ENCODE measurements at regions of chr2 and their contacts with region 1.

Region 1: DNA sequence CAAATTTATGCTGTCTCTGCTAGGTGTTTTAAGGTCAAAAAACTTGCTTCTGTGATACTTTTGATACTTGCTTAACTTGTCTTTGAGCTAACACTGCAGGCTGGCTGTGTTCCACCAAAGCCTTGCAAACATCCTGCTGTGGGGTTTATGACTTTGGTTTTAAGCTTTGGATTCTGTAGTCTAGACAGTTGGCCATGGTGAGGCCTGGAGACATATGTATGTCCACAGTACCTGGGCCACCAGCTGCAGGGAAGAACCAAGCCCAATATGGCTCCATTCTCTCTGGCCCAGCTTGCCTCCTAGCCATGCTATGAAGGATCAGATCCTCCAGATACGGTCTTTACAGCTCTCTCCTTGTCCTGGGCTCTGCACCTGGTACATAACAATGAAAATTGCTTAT is 113.9 kb downstream of the INO80D start:
- DNase-seq: peak; percentile 65
- ATAC-seq: peak; percentile 55
- H3K4me3 ChIP-seq: no peak overlapping the region
- H3K27ac ChIP-seq: no peak overlapping the region
- H3K4me1 ChIP-seq: peaks cover 21% of the 10 kb centered on the region
- H3K27me3 ChIP-seq: no peaks in the 10 kb centered on the region
- CTCF ChIP-seq: no peak

Region 2: DNA sequence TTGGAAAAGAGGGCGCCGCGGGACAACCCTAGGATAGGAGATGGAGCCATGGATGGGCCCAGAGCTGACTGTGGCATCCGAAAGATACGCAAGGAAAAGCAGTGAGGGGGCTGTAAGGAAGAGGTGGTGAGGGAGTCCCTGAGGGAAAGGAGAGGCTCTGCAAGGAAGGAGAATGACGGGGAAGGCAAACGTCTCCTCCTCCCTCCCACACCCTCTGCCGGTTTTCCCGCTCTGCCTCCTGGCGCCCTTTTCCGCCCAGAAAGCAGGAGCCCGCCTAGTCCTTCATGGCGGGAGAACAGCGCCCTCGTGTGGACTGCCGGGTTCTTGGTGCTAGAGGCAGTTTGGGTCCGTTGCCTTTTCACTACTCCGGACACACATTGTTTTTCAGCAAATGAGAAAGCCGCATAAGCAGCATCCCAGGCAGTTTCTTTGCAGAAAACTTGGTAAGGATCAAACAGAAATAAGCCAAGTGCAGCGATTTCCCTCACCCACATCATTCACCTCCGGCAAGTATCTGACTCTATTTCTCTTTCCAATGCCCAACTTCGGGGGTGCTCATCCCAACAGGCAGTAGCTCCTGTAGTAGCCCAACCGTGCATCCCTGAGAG is 86.5 kb before region 1 on chr2:
- CTCF ChIA-PET with region 1: no interaction called
- POLR2A ChIA-PET with region 1: interaction called, 10 read pairs
- intact Hi-C with region 1: no loop called
- DNase-seq: peak; percentile 89
- ATAC-seq: peak; percentile 91
- H3K4me3 ChIP-seq: no peak overlapping the region
- H3K27ac ChIP-seq: no peak overlapping the region
- H3K4me1 ChIP-seq: peaks cover 4% of the 10 kb centered on the region
- H3K27me3 ChIP-seq: 0 out of 2 replicates have a peak, but pooled peaks cover 3% of the 10 kb centered on the region
- CTCF ChIP-seq: peak; percentile 90

Measured in PC-3 (cell line).